ENCODE measurements at regions of chr10 and their contacts with region 1.

Region 1: DNA sequence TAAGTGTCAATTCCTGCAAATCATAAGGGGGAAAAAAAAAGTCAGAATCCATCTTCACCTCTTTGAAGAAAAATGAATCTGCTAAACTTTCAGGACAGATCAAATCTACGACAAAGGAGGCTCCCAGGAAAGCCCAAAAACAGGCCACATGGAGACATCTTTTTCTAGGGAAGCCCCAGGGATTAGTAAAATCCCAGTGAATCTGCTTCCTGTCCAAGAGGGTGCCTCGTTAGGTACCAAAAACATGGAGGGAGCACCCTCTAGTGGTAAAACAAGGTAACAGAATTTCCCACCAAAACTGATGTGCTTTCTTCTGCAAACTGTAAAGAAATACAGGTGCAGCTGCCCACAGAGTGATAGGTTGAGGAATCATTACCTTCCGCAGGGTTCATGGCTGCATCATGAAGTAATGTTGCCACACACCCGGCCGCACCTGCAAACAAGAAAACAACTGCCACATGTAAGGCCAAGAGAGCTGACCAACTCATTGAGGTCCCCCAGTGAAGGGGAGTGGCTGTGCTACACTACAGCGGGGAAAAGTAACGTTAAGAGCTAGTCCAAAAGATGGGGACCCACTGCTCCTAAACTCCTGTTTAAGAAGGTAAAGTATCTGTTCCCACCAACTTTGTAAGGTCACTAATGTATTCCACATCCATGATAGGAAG is 7.9 kb downstream of the SLC25A28 start:
- DNase-seq: peak; percentile 45
- H3K4me3 ChIP-seq: no peak overlapping the region
- H3K27ac ChIP-seq: no peak overlapping the region
- H3K4me1 ChIP-seq: no peaks in the 10 kb centered on the region
- H3K27me3 ChIP-seq: no peaks in the 10 kb centered on the region
- CTCF ChIP-seq: peak; percentile 72

Region 2: GRCh38 chr10:99391346-99391745 is 221.0 kb before region 1 on chr10:
- intact Hi-C with region 1: loop called (anchors 2 kb)
- DNase-seq: no peak
- H3K4me3 ChIP-seq: no peak overlapping the region
- H3K27ac ChIP-seq: no peak overlapping the region
- H3K4me1 ChIP-seq: no peaks in the 10 kb centered on the region
- H3K27me3 ChIP-seq: no peaks in the 10 kb centered on the region
- CTCF ChIP-seq: no peak

Region 3: DNA sequence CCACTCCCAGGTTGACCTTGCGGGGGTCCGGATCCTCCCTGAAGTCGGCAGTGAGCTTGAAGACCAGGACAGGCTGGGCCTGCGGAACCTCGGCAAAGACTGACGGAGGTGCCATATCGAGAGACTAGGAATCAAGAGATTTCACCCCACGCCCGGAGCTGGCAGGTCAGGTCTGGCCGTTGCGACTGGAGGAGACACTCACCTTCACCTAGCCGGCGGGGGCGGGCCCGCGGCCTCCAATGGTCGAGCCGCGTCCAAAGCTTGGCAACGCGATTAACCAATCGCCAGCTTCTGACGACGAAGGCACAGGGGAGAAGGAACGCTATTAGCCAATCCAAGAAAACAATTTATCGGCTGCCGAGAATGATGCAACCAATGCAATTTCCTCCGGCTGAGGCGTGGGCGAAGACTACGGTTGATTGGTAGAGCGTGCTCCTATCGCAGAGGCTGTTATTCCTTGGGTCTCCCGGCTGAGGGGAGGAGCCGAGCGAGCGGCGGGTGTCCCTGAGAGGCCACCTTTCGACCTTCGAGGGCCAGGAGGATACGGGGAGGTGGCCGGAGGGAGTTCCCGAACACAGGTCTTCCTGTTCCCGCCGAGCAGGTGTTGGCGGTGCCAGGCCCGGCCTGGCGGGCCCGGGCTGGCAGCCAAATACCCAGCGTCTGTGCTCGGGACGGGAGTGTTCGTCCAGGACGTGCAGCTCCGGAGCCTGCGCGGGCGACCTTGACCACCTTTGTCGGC is 181.7 kb before region 1 on chr10 and contains the start of gene GOT1:
- intact Hi-C with region 1: loop called (anchors 5 kb)
- DNase-seq: peak; percentile 98
- H3K4me3 ChIP-seq: peak within 1 kb of the TSS; percentile 87
- H3K27ac ChIP-seq: peak within 1 kb of the TSS; percentile 93
- H3K4me1 ChIP-seq: no peaks in the 10 kb centered on the region
- H3K27me3 ChIP-seq: no peaks in the 10 kb centered on the region
- CTCF ChIP-seq: no peak
- total RNA-seq, gene GOT1: 96.7 to 135 TPM

Region 4: GRCh38 chr10:99560277-99561126 is 51.8 kb before region 1 on chr10:
- intact Hi-C with region 1: loop called (anchors 1 kb)
- DNase-seq: peak; percentile 75
- H3K4me3 ChIP-seq: no peak overlapping the region
- H3K27ac ChIP-seq: no peak overlapping the region
- H3K4me1 ChIP-seq: no peaks in the 10 kb centered on the region
- H3K27me3 ChIP-seq: no peaks in the 10 kb centered on the region
- CTCF ChIP-seq: peak; percentile 80